ENCODE measurements at regions of chr17 and their contacts with region 1.

Region 1: DNA sequence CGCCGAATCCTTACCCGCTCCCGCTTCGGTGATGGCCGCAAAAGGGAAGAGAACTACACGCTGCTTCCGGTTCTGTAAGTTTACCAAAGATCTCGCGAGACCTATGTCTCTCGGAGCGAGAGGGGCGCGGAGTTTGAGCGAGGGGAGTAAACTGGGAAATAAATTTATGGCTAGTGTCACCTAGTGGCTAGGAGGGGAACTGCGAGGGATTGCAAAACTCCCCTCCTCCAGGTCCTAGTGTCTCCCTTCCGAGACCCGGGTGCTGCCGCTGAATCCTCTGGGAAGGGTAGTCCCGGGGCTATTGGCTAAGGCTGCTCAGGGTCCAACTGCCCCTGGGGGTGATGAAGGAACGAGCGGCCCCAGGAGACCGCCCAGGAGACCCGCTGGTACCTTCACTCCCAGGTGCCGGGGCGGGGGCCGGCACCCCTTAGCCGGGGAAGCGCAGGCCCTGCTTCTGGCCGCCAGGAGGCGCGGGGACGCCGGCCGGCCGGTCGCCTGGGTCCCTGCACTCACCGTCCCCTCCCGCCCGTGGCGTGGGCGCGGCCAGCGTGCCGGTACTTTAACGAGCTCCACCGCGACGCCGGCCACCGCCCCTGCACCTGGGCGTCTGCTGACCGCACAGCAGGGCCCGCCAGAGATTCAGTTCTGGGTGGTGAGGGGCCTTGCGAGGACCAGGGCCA is at the start of gene RPL26:
- H3K4me3 Mint-ChIP-seq: peak within 1 kb of the TSS; percentile 97
- H3K27ac Mint-ChIP-seq: peak within 1 kb of the TSS; percentile 93
- H3K4me1 Mint-ChIP-seq: peaks cover 35% of the 10 kb centered on the region
- H3K27me3 Mint-ChIP-seq: no peaks in the 10 kb centered on the region

Region 2: DNA sequence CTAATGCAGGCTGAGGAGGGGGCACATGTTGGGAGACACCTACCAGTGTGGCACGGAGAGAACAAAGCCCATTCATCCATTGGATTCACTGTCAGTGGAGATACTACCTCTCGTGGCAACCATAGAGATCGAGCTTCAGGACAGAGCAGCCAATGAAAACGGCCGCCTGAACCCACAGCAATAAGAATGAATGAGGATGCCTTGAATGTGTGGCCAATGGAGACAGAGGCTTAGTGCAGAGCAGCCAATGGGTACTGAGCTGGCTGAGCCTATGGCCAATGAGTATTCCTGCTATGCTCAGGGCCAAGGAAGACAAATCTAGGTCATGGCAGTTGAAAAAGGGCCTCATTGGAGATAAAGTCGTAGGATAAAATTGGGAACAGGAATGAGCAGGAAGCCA is 62.3 kb before region 1 on chr17:
- intact Hi-C with region 1: no loop called
- H3K4me3 Mint-ChIP-seq: no peak overlapping the region
- H3K27ac Mint-ChIP-seq: no peak overlapping the region
- H3K4me1 Mint-ChIP-seq: peaks cover 14% of the 10 kb centered on the region
- H3K27me3 Mint-ChIP-seq: peaks cover 38% of the 10 kb centered on the region

Region 3: DNA sequence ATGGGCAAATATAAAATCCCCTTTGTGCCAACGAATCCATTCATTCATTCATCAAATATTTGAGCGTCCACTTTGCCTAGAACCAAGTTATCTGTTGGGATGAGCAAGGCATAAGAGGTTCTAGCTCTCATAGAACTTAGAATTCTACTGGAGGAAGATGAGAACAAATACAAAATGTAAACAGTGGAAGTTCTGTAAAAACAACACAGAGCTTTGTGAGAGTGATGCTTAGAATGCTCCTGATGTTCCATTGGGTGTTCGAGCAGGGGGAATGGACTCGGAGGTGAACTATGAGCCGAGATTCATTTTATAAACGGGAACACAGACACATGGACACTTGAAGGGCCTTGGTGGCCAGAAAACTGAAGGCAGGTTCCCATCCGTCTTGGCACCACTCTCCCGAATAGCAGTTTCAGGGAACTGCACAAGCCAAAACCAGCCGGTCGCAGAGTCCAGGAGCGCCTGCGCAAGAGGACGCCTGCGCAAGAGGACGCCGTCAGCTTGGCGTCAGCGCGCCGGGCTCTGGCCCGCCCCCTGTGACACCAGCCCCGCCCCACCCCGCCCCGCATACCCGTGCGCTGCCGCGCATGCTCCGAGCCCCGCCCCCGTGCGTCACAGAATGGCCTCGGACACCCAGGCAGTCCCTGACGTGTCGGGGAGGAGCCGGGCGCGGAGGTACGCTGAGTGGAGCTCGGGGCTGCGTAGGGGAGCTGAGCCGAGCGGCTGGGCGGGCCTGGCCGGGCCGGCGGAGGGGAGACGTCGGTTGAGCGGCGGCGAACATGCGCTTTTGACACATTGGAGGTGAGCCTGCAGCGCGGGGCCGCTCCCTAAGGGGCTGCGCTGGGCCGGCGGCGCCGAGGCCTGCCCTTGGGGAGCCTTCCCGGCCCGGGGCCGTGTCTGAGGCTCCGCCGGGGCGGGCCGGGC is 52.2 kb after region 1 on chr17 and contains the start of gene NDEL1:
- intact Hi-C with region 1: loop called (anchors 2 kb)
- H3K4me3 Mint-ChIP-seq: peak within 1 kb of the TSS; percentile 93
- H3K27ac Mint-ChIP-seq: peak within 1 kb of the TSS; percentile 94
- H3K4me1 Mint-ChIP-seq: peaks cover 14% of the 10 kb centered on the region
- H3K27me3 Mint-ChIP-seq: no peaks in the 10 kb centered on the region

Region 4: DNA sequence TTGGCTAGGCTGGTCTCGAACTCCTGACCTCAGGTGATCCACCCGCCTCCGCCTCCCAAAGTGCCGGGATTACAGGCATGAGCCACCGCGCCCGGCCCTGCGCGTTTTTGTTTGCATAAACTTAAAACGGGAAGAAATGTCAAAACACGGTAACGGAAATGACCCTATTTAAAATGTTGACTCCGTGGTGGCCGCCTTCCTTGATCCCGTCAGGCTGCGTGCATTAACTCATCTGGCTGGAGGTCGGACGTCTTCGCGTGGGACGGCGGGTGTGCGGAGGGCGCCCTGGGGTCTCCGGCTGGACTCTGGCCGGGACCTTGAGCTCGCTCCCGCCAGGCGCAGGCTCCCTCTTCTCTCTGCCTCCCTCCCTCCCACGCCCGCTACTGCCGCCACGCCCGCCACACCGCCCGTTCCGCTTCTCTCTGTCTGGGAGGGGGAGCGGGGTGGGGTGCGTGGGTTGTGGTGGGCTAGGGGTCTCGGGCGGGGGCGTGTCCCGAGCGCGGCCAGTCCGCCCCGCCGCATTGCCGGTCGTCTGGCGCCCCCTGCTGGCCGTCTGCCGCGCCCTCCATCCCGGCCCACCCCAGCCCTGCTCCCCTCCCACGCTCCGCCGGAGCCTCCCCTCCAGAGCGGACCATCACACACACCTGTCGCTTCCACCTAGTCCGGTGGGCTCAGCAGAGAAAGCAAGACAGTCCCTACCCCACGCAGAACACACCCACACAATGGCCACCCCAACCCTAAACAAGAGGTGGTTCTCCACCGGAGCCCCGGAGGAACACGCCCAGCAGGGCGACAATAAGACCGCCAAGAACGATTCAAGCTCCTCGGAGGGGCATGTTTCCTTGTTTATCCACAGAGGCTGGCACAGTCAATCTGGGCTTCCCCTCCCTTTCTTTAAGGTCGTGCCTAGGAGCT is 362.6 kb after region 1 on chr17:
- intact Hi-C with region 1: loop called (anchors 1 kb)
- H3K4me3 Mint-ChIP-seq: peak overlapping the region; percentile 95
- H3K27ac Mint-ChIP-seq: peak overlapping the region; percentile 87
- H3K4me1 Mint-ChIP-seq: peaks cover 17% of the 10 kb centered on the region
- H3K27me3 Mint-ChIP-seq: peaks cover 35% of the 10 kb centered on the region

Measured in dendritic cell treated with granulocyte-macrophage colony-stimulating factor and Interleukin-4, amounts not matched to agents 40 ng/mL and 50 ng/mL, for 4 days (primary cell).